ENCODE measurements at regions of chr1 and their contacts with region 1.

Region 1: GRCh38 chr1:205255941-205256780 is 28.4 kb downstream of the TMCC2 start:
- DNase-seq: no peak
- ATAC-seq: peak; percentile 98
- H3K4me3 ChIP-seq: no peak overlapping the region
- H3K27ac ChIP-seq: no peak overlapping the region
- H3K4me1 ChIP-seq: no peaks in the 10 kb centered on the region
- H3K27me3 ChIP-seq: peaks cover under 1 to 2% of the 10 kb centered on the region in 2 experiments; a peak in 2 of 4 replicates
- CTCF ChIP-seq: peak; percentile 91 to 96 (median 93); a peak in 5 of 6 replicates
- EP300 ChIP-seq: no peak
- POLR2A ChIP-seq: no peak
- RAD21 ChIP-seq: peak; percentile 99

Region 2: DNA sequence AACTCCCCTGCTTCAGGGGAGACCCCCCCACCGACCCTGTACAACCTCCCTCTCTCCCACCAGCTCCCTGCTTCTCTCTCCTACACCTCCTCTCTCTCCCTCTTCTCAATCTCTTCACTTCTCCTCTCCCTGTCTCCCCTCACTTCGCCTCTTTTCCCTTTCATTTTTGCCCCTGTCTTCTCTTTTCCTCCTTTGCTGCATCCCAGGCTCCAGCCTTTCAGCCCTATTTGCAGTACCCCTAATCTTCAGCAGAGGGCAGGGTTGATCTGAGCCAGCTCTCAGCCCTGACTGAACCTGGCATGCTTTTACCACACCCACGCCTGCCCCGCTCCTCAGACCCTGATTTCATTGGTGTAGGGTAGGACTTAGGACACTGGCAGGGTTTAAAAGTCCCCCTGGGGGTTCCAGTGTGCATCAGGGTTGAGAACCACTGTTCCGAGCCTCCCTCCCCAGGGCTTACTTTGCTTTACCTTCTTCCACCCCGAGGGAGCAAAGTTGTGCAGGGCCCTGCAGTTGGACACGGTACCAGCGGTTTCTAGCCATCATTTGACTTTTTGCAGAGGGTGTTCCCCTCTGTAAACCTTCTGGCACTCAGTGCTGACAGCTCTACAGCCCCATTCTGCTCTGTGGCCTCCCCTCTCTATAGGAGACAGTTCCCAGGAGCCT is 280.5 kb before region 1 on chr1:
- CTCF ChIA-PET with region 1: interaction called, 42 read pairs
- POLR2A ChIA-PET with region 1: no interaction called
- RAD21 ChIA-PET with region 1: interaction called, 24 read pairs
- SMC1A ChIA-PET with region 1: interaction called, 6 read pairs
- in situ Hi-C with region 1: loop called (anchors 5 kb)
- intact Hi-C with region 1: loop called (anchors 1 kb)
- DNase-seq: no peak
- ATAC-seq: peak; percentile 90
- H3K4me3 ChIP-seq: no peak overlapping the region
- H3K27ac ChIP-seq: no peak overlapping the region
- H3K4me1 ChIP-seq: peaks cover 6% of the 10 kb centered on the region
- H3K27me3 ChIP-seq: peaks cover 0 to 5% of the 10 kb centered on the region in 2 experiments; a peak in 3 of 4 replicates
- CTCF ChIP-seq: peak; percentile 84 to 89 (median 88)
- EP300 ChIP-seq: no peak
- POLR2A ChIP-seq: no peak
- RAD21 ChIP-seq: peak; percentile 79

Region 3: DNA sequence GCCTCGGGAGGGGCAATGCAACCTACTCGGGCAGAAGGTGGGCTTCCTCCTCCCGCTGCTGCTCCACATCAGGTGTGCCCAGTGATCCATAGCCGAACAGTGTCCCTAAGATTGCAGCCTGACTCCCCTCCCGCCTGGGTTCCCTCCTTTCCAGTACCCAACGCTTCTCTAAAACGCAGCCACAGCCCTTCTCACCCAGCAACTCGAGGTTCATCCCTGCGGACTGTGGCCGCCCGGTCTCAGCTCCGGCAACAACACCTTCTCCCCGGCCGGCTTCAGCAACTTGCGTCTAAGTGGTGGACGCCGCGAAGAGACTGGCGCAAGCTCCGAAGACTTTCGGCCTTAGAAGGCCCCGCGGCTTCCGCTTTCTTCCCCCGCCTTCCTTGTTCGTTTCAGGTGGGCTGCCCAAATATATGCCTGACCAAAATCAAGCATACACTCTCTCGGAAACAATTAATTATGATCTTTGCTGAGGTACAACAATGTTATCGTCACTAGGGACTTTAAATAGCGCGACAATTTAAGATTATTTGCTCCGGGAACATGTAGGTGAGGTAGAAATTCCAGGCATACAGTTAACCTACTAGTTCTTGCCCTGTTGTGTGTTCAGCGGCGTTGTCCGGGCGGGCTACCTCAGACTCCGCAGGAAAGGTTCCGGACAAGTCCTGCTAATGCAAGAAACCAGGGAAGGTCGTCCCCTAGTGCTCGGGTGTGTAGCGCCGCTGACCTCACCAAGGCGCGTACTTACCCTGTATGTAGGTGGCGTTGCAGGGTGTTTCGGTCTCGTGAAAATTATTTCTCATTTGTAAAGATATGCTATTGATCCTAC is 134.3 kb before region 1 on chr1 and contains the start of gene RBBP5:
- CTCF ChIA-PET with region 1: interaction called, 24 read pairs
- POLR2A ChIA-PET with region 1: no interaction called
- RAD21 ChIA-PET with region 1: interaction called, 6 read pairs
- SMC1A ChIA-PET with region 1: interaction called, 6 read pairs
- in situ Hi-C with region 1: no loop called
- intact Hi-C with region 1: no loop called
- DNase-seq: peak; percentile 94
- ATAC-seq: peak; percentile 97
- H3K4me3 ChIP-seq: peak within 1 kb of the TSS; percentile 96
- H3K27ac ChIP-seq: peak within 1 kb of the TSS; percentile 99
- H3K4me1 ChIP-seq: no peaks in the 10 kb centered on the region; the same call in 1 of the 2 replicates
- H3K27me3 ChIP-seq: no peaks in the 10 kb centered on the region
- CTCF ChIP-seq: peak; percentile 76 to 84 (median 82)
- EP300 ChIP-seq: peak in 1 of 2 experiments; percentile 22; a peak in 2 of 4 replicates
- POLR2A ChIP-seq: peak; percentile 99
- RAD21 ChIP-seq: peak; percentile 55
- polyA plus RNA-seq, gene RBBP5: 10.0 to 11.5 TPM

Region 4: GRCh38 chr1:205199090-205199930 is 56.9 kb before region 1 on chr1:
- CTCF ChIA-PET with region 1: interaction called, 10 read pairs
- POLR2A ChIA-PET with region 1: no interaction called
- RAD21 ChIA-PET with region 1: interaction called, 3 read pairs
- SMC1A ChIA-PET with region 1: interaction called, 3 read pairs
- in situ Hi-C with region 1: no loop called
- intact Hi-C with region 1: no loop called
- DNase-seq: no peak
- ATAC-seq: peak; percentile 67
- H3K4me3 ChIP-seq: no peak overlapping the region
- H3K27ac ChIP-seq: no peak overlapping the region
- H3K4me1 ChIP-seq: peaks cover 3% of the 10 kb centered on the region; the same call in 1 of the 2 replicates
- H3K27me3 ChIP-seq: no peaks in the 10 kb centered on the region
- CTCF ChIP-seq: peak in 1 of 3 experiments; percentile 13; a peak in 1 of 6 replicates
- EP300 ChIP-seq: no peak
- POLR2A ChIP-seq: no peak
- RAD21 ChIP-seq: peak; percentile 20; the same call in 1 of the 2 replicates

Region 5: GRCh38 chr1:205243350-205244191 is 12.6 kb before region 1 on chr1:
- CTCF ChIA-PET with region 1: interaction called, 836 read pairs
- POLR2A ChIA-PET with region 1: interaction called, 10 read pairs
- RAD21 ChIA-PET with region 1: interaction called, 728 read pairs
- SMC1A ChIA-PET with region 1: interaction called, 110 read pairs
- in situ Hi-C with region 1: no loop called
- intact Hi-C with region 1: no loop called
- DNase-seq: no peak
- ATAC-seq: peak; percentile 12; the same call in 2 of the 3 replicates
- H3K4me3 ChIP-seq: no peak overlapping the region
- H3K27ac ChIP-seq: no peak overlapping the region
- H3K4me1 ChIP-seq: peaks cover 2% of the 10 kb centered on the region
- H3K27me3 ChIP-seq: no peaks in the 10 kb centered on the region; a peak in 3 of 4 replicates
- CTCF ChIP-seq: no peak
- EP300 ChIP-seq: no peak
- POLR2A ChIP-seq: no peak
- RAD21 ChIP-seq: no peak

Region 6: GRCh38 chr1:205273551-205273982 is 17.4 kb after region 1 on chr1:
- CTCF ChIA-PET with region 1: interaction called, 21 read pairs
- POLR2A ChIA-PET with region 1: interaction called, 3 read pairs
- RAD21 ChIA-PET with region 1: interaction called, 20 read pairs
- SMC1A ChIA-PET with region 1: interaction called, 7 read pairs
- in situ Hi-C with region 1: no loop called
- intact Hi-C with region 1: no loop called
- DNase-seq: peak; percentile 32
- ATAC-seq: peak; percentile 90
- H3K4me3 ChIP-seq: no peak overlapping the region
- H3K27ac ChIP-seq: no peak overlapping the region
- H3K4me1 ChIP-seq: peaks cover 3% of the 10 kb centered on the region; the same call in 1 of the 2 replicates
- H3K27me3 ChIP-seq: peaks cover 0 to 2% of the 10 kb centered on the region in 2 experiments; a peak in 1 of 4 replicates
- CTCF ChIP-seq: peak; percentile 92 to 98 (median 98)
- EP300 ChIP-seq: peak in 1 of 2 experiments; percentile 38; a peak in 1 of 4 replicates
- POLR2A ChIP-seq: no peak
- RAD21 ChIP-seq: peak; percentile 96